B cell (primary cell): ENCODE measurements at regions of chr3 and their contacts with region 1.

Region 1: GRCh38 chr3:51498876-51499738 is 708 bp downstream of the DCAF1 start:
- DNase-seq: peak; percentile 85
- ATAC-seq: peak; percentile 48
- H3K4me3 ChIP-seq: peak overlapping the region; percentile 72 to 95 (median 84)
- H3K4me3 Mint-ChIP-seq: peak overlapping the region; percentile 88
- H3K27ac ChIP-seq: peak overlapping the region; percentile 85 to 92
- H3K27ac Mint-ChIP-seq: peak overlapping the region; percentile 95
- H3K4me1 ChIP-seq: peaks cover 9 to 16% of the 10 kb centered on the region in 2 donors
- H3K4me1 Mint-ChIP-seq: peaks cover 17% of the 10 kb centered on the region
- H3K27me3 ChIP-seq: no peaks in the 10 kb centered on the region
- H3K27me3 Mint-ChIP-seq: no peaks in the 10 kb centered on the region
- CTCF ChIP-seq: no peak

Region 2: DNA sequence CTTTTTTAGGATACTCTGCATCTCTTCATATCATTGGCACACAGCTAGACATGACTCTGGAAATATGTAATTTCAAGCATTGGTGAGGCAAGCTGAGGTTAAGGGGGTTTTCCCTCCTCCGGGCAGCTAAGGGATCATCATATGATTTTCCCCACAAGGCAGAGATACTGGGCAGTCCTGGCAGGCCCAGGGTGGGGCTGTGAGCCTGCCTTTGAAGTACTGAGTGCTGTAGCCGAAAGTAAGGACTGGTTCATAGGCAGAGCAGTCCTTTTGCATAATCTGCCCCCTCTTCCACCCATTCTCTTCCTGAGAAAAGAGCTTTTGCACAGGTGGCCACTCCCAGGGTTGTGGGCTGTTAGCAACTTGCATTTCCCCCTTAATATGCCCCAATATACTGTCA is 282.8 kb before region 1 on chr3:
- CTCF ChIA-PET with region 1: no interaction called
- POLR2A ChIA-PET with region 1: no interaction called
- intact Hi-C with region 1: no loop called
- DNase-seq: no peak
- ATAC-seq: no peak
- H3K4me3 ChIP-seq: no peak overlapping the region
- H3K4me3 Mint-ChIP-seq: no peak overlapping the region
- H3K27ac ChIP-seq: no peak overlapping the region
- H3K27ac Mint-ChIP-seq: no peak overlapping the region
- H3K4me1 ChIP-seq: no peaks in the 10 kb centered on the region
- H3K4me1 Mint-ChIP-seq: no peaks in the 10 kb centered on the region
- H3K27me3 ChIP-seq: no peaks in the 10 kb centered on the region
- H3K27me3 Mint-ChIP-seq: peaks cover 17% of the 10 kb centered on the region
- CTCF ChIP-seq: no peak

Region 3: DNA sequence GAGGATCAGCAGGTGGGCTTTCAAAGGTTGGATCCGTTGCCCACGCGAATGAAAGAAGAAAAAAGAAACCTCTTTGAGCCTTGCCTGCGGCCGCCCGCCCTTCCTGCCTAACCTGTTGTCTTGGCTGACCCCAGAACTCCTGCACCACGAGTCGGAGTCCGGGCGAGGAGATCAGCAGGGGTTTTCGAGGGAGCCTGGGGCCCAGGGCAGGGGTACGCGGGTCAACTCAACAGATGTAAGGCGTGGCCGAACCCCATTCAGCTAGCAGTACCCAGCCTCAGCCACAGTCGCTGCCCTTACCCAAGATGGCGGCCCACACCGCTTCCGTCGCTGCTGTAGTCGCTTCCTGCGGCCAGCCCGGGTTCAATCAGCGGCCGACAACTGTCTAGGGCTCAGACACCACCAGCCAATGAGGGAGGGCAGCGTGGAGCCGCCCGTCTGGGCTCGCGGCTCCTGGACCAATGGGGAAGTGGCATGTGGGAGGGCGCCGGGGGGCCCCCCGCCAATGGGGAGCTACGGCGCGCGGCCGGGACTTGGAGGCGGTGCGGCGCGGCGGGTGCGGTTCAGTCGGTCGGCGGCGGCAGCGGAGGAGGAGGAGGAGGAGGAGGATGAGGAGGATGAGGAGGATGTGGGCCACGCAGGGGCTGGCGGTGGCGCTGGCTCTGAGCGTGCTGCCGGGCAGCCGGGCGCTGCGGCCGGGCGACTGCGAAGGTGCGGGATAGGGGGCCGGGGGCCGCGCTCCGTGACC is 114.2 kb before region 1 on chr3 and contains the start of gene MANF:
- CTCF ChIA-PET with region 1: interaction called, 42 read pairs
- POLR2A ChIA-PET with region 1: interaction called, 18 read pairs
- intact Hi-C with region 1: loop called (anchors 1 kb)
- DNase-seq: peak; percentile 98
- ATAC-seq: peak; percentile 95
- H3K4me3 ChIP-seq: peak within 1 kb of the TSS; percentile 74 to 97 (median 87)
- H3K4me3 Mint-ChIP-seq: peak within 1 kb of the TSS; percentile 99
- H3K27ac ChIP-seq: peak within 1 kb of the TSS; percentile 82 to 95
- H3K27ac Mint-ChIP-seq: peak within 1 kb of the TSS; percentile 99
- H3K4me1 ChIP-seq: peaks cover 21 to 33% of the 10 kb centered on the region in 2 donors
- H3K4me1 Mint-ChIP-seq: peaks cover 42% of the 10 kb centered on the region
- H3K27me3 ChIP-seq: no peaks in the 10 kb centered on the region
- H3K27me3 Mint-ChIP-seq: no peaks in the 10 kb centered on the region
- CTCF ChIP-seq: no peak
- total RNA-seq, gene MANF: 28.4 and 29.7 TPM in 2 replicates

Region 4: GRCh38 chr3:51519848-51520247 is 20.7 kb after region 1 on chr3:
- CTCF ChIA-PET with region 1: interaction called, 9 read pairs
- POLR2A ChIA-PET with region 1: interaction called, 3 read pairs
- intact Hi-C with region 1: loop called (anchors 1 kb)
- DNase-seq: no peak
- ATAC-seq: no peak
- H3K4me3 ChIP-seq: no peak overlapping the region
- H3K4me3 Mint-ChIP-seq: no peak overlapping the region
- H3K27ac ChIP-seq: no peak overlapping the region
- H3K27ac Mint-ChIP-seq: no peak overlapping the region
- H3K4me1 ChIP-seq: peaks cover 11 to 20% of the 10 kb centered on the region in 2 donors
- H3K4me1 Mint-ChIP-seq: peaks cover 23% of the 10 kb centered on the region
- H3K27me3 ChIP-seq: no peaks in the 10 kb centered on the region
- H3K27me3 Mint-ChIP-seq: no peaks in the 10 kb centered on the region
- CTCF ChIP-seq: no peak

Region 5: DNA sequence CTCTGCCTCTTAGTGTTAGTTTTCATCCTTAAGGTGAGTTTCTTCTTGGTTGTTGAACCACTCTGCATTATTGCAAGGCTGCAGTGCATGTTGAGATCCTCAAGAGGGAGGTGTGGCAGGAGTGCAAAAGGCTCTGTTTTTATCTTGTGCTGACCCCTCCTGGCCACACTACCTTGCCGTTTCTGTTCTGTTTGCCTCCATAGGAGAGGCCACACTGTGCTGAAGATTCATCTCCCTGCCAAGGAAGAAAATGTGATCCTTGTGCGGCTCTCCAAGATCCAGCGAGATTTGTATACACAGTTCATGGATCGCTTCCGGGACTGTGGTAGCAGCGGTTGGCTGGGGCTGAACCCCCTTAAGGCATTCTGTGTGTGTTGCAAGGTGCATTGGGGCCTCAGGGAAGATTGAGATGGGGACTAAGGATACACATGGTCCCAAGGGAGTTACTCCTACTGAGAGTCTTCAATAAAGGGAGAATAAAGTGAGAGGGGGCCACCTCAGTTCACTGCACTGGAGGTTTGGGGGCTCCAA is 138.9 kb after region 1 on chr3:
- CTCF ChIA-PET with region 1: interaction called, 51 read pairs
- POLR2A ChIA-PET with region 1: interaction called, 3 read pairs
- intact Hi-C with region 1: loop called (anchors 1 kb)
- DNase-seq: peak; percentile 41
- ATAC-seq: peak; percentile 79
- H3K4me3 ChIP-seq: no peak overlapping the region
- H3K4me3 Mint-ChIP-seq: no peak overlapping the region
- H3K27ac ChIP-seq: no peak overlapping the region
- H3K27ac Mint-ChIP-seq: no peak overlapping the region
- H3K4me1 ChIP-seq: no peaks in the 10 kb centered on the region
- H3K4me1 Mint-ChIP-seq: no peaks in the 10 kb centered on the region
- H3K27me3 ChIP-seq: no peaks in the 10 kb centered on the region
- H3K27me3 Mint-ChIP-seq: no peaks in the 10 kb centered on the region
- CTCF ChIP-seq: peak; percentile 62

Region 6: DNA sequence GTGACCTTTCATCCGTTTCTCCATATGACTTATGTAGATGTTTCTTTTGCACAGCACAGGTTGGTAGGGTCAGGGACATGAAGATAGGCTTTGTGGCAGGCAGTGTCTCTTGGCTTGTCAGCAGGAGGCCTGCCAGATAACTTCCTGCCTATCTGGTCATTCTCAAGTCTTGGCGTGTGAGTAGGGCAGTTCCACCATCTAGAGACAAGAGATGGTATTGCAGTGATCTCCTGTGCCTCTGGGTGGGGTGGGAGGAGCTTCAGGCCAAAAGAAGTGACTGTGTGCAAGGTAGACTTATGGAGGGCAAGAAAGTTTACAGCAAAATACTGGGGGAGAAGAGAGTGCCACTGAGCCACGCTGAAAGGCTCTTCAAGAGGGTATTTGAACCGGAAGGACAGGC is 183.0 kb after region 1 on chr3:
- CTCF ChIA-PET with region 1: interaction called, 220 read pairs
- POLR2A ChIA-PET with region 1: interaction called, 24 read pairs
- intact Hi-C with region 1: loop called (anchors 1 kb)
- DNase-seq: peak; percentile 89
- ATAC-seq: peak; percentile 83
- H3K4me3 ChIP-seq: no peak overlapping the region
- H3K4me3 Mint-ChIP-seq: peak overlapping the region; percentile 5
- H3K27ac ChIP-seq: peak overlapping the region; percentile 33 to 69
- H3K27ac Mint-ChIP-seq: peak overlapping the region; percentile 54
- H3K4me1 ChIP-seq: peaks cover 63 to 87% of the 10 kb centered on the region in 2 donors
- H3K4me1 Mint-ChIP-seq: peaks cover 78% of the 10 kb centered on the region
- H3K27me3 ChIP-seq: no peaks in the 10 kb centered on the region
- H3K27me3 Mint-ChIP-seq: no peaks in the 10 kb centered on the region
- CTCF ChIP-seq: peak; percentile 90